Mucosa of descending colon (tissue), 3 donors: ENCODE measurements at regions of chr15 and their contacts with region 1.

Region 1: DNA sequence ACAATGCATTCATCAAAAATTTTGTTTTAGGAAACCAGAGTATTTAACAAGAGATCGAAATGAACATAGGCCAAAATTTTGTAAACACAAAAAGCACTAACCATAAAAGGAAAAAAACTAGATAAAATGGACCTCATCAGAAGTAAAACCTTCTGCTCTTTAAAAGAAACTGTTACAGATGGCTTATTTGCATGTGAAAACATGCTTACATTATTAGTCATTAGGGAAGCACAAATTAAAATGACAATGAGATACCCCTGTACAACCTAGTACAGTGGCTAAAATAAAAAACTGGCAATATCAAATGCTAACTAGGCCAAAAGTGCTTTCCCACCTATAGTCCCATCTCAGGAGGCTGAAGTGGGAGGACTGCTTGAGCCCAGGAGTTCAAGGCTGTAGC is 19.3 kb downstream of the UBR1 start:
- DNase-seq: no peak
- ATAC-seq: no peak
- H3K4me3 ChIP-seq: no peak overlapping the region
- H3K4me1 ChIP-seq: no peaks in the 10 kb centered on the region
- CTCF ChIP-seq: no peak

Region 2: DNA sequence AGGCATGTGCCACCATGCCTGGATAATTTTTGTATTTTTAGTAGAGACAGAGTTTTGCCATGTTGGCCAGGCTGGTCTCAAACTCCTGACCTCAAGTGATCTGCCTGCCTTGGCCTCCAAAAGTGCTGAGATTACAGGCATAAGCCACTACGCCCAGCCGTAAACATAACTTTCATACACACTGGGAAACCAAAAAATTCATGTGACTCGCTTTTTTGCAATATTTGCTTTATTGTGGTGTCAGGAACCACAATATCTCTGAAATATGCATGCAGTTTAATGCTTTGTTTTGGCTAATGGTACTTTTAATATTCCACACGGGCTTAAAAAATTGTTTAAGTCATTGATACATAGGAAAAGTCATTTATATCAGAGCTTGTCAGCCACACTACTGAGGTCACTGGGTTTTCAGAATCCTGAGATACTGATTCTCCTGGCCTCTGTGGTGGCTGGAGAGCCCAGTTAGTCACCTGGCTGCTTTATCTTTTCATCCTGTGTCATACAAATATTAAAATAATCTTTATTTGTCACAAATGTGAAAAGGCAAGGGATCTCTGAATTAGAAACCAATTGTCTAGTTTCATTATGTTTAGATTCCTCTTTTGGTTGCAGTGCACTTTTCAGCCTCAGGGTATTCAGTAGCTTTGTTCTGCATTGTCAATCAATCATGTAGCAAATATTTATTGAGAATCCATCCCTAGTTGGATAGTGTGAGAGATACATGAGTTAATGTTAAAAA is 56.8 kb after region 1 on chr15:
- intact Hi-C with region 1: loop called in 1 of 2 experiments (anchors 10 kb)
- DNase-seq: no peak
- ATAC-seq: no peak
- H3K4me3 ChIP-seq: no peak overlapping the region
- H3K4me1 ChIP-seq: no peaks in the 10 kb centered on the region
- CTCF ChIP-seq: no peak

Region 3: GRCh38 chr15:43241100-43241499 is 154.5 kb after region 1 on chr15:
- intact Hi-C with region 1: no loop called
- DNase-seq: no peak
- ATAC-seq: no peak
- H3K4me3 ChIP-seq: no peak overlapping the region
- H3K4me1 ChIP-seq: no peaks in the 10 kb centered on the region
- CTCF ChIP-seq: no peak

Region 4: GRCh38 chr15:43352693-43353382 is 266.3 kb after region 1 on chr15:
- intact Hi-C with region 1: no loop called
- DNase-seq: no peak
- ATAC-seq: no peak
- H3K4me3 ChIP-seq: no peak overlapping the region
- H3K4me1 ChIP-seq: no peaks in the 10 kb centered on the region
- CTCF ChIP-seq: no peak